Panc1 (cell line): ENCODE measurements at regions of chr13 and their contacts with region 1.

Region 1: DNA sequence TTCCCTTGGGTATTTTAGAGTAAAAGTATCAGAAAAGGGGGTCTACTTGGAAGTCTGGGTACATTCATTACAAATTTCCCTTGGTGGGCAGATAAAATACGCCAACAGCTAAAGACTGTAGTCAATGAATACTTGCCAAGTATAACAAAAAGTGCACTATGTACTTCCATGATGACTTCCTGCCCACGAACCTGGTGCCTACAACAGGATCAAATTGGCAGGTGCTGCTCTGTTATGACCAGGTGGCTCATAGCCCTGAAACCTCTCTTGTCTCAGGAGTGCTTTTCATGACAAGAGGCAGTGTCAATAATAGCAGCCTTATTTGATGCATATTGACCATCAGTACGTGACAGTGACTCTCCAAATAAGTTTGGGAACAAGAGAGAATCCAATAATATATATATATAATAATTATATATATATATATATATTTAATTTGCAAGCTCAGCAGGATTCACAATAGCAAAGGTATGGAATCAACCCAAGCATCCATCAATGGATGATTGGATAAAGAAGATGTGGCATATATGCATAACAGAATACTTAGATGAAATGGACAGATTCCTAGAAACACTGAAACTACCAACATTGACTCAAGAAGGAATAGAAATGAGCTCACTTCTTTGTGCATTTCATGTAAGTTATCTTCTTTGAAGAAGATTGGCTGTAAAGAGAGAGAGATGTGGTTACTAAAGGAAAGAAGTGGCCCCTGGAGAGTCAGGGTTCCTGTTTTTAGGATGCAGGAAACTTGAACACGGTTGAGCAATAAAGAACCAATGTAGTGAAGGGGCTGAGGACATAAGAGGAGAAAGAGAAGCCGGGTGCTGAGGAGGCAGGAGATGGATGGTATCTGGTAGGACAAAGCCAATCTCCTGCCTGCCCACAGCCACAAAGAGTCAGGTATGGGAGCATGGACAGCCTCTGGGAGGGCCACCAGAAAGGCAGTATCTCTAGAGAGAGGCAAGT is 52.0 kb upstream of the GTF2F2 start:
- DNase-seq: no peak
- ATAC-seq: no peak
- H3K4me3 ChIP-seq: no peak overlapping the region
- H3K27ac ChIP-seq: no peak overlapping the region
- H3K4me1 ChIP-seq: no peaks in the 10 kb centered on the region
- H3K27me3 ChIP-seq: no peaks in the 10 kb centered on the region
- CTCF ChIP-seq: no peak

Region 2: GRCh38 chr13:44667943-44668342 is 400.4 kb before region 1 on chr13:
- CTCF ChIA-PET with region 1: no interaction called
- POLR2A ChIA-PET with region 1: no interaction called
- in situ Hi-C with region 1: no loop called
- intact Hi-C with region 1: no loop called
- DNase-seq: no peak
- ATAC-seq: no peak
- H3K4me3 ChIP-seq: no peak overlapping the region
- H3K27ac ChIP-seq: no peak overlapping the region
- H3K4me1 ChIP-seq: no peaks in the 10 kb centered on the region
- H3K27me3 ChIP-seq: no peaks in the 10 kb centered on the region
- CTCF ChIP-seq: no peak

Region 3: DNA sequence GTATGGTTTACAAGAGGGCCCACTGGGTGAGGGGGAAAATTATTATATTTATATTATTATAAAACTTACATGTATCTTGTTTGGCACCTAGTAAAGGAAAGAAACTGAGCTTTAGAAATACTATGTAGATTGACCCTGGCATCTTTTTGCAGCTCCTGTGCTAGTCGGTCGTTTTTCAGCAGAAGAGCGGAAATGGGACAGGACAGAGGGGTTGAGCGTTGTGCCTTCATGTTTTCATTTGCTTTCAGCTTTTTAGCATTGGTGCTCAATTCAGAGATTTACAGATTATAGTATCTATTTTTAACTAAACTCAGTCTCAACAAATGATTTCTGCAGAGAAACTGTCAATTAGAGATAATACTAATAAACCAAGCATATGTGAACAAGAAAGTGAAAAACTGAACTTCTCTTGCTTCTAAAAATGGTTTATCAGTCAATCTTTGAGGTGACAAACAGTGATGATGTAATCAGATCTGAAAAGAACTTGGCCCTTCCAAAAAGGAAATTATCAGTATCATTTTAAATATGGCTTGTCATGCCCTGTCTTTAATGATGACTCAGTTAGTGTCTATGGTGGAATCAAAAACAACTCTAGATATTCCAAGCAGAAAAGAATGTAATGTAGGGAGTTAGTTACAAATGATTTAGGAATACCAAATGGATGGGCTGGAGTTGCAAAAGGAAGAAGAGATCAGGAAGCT is 189.5 kb after region 1 on chr13:
- CTCF ChIA-PET with region 1: interaction called, 20 read pairs
- POLR2A ChIA-PET with region 1: no interaction called
- in situ Hi-C with region 1: no loop called
- intact Hi-C with region 1: no loop called
- DNase-seq: no peak
- ATAC-seq: no peak
- H3K4me3 ChIP-seq: no peak overlapping the region
- H3K27ac ChIP-seq: no peak overlapping the region
- H3K4me1 ChIP-seq: no peaks in the 10 kb centered on the region
- H3K27me3 ChIP-seq: no peaks in the 10 kb centered on the region
- CTCF ChIP-seq: no peak